H1 (cell line): ENCODE measurements at regions of chr18 and their contacts with region 1.

Region 1: DNA sequence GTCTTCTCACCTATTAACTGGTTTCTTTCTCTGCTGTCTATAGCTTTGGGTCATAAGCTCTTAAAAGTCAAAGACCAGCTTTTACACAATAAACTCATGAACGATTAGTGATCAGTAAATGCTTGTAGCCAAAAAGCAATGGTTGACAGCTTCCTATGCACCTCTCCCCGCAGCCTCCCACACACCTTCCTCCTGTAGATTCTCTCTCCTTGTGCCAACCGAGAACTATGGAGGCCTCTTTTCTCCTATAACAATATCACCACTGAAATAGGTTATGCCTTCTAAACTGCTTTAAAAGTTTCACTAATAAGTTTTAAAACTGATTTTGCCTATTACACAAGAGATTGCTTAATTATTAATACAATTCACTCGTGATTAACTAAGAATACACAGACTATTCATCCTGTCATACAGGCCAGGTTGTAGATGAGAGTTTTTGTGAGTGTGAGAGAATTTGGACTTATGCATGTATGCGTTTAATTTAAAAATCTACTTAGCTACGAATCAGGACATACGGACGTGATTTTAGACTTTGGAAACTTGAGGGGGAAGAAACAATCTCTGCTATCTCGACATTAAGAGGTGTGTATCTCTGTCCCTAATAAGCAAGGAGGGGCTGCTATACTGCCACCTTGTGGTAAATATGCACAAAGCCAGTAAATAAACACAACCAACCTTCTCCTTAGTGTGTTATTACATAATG is 229.1 kb upstream of the RBBP8 start:
- DNase-seq: no peak
- H3K4me3 ChIP-seq: no peak overlapping the region
- H3K27ac ChIP-seq: no peak overlapping the region
- H3K4me1 ChIP-seq: no peaks in the 10 kb centered on the region
- H3K27me3 ChIP-seq: no peaks in the 10 kb centered on the region
- CTCF ChIP-seq: peak in 2 of 3 experiments; percentile 55 to 69; a peak in 3 of 4 replicates
- EP300 ChIP-seq: no peak
- POLR2A ChIP-seq: no peak
- RAD21 ChIP-seq: peak; percentile 67 to 76

Region 2: DNA sequence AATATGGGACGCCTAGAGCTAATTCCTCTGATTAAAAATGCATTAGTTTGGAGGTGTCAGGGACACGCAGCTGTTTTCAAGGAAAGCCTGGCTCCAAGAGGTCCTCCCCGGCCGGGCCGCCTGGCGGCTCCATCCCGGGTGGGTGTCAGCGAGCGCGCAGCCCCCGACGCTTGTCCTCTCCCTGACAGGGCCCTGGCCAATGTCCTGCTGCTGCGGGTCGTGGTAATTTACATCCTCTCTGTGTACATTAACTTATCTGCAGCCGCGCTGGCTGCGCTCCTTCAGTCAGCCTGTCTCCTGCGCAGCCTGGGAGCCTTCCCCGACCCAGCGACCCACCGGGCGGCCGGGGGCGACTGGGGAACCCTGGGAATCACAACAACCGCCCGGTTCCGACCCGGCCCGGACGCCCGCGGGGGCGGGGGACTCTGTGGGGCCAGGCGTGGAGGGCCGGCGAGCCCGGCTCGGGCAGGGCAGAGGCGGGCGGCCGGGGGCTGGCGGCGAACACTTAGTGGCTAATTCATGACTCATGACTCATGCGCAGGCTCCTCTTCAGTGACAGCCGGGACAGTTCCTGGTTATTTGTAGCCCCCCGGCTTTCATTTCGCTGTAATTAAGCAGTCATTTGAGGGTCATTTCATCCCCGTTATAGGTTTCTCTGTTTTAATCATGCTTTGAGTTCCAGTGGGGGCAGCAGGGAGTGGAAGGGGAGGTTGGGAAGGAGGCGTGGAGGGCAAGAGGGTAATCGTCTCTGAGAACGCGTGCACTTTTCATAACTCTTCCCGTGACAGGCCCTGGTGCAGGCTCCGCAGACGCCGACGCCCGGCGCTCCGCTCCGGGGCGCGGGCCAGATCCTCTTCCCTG is 144.4 kb before region 1 on chr18:
- CTCF ChIA-PET with region 1: no interaction called
- POLR2A ChIA-PET with region 1: no interaction called
- DNase-seq: peak in 1 of 2 experiments; percentile 61
- H3K4me3 ChIP-seq: peak overlapping the region; percentile 27 to 68 (median 46)
- H3K27ac ChIP-seq: no peak overlapping the region
- H3K4me1 ChIP-seq: peaks cover 0 to 3% (median 2%) of the 10 kb centered on the region in 4 experiments; a peak in 4 of 7 replicates
- H3K27me3 ChIP-seq: peaks cover 7 to 31% (median 29%) of the 10 kb centered on the region in 4 experiments
- CTCF ChIP-seq: no peak
- EP300 ChIP-seq: no peak
- POLR2A ChIP-seq: no peak
- RAD21 ChIP-seq: no peak

Region 3: GRCh38 chr18:22663378-22663777 is 40.7 kb before region 1 on chr18:
- CTCF ChIA-PET with region 1: no interaction called
- POLR2A ChIA-PET with region 1: no interaction called
- DNase-seq: no peak
- H3K4me3 ChIP-seq: no peak overlapping the region
- H3K27ac ChIP-seq: no peak overlapping the region
- H3K4me1 ChIP-seq: no peaks in the 10 kb centered on the region
- H3K27me3 ChIP-seq: no peaks in the 10 kb centered on the region
- CTCF ChIP-seq: no peak
- EP300 ChIP-seq: no peak
- POLR2A ChIP-seq: no peak
- RAD21 ChIP-seq: no peak

Region 4: GRCh38 chr18:22691946-22692710 is 11.9 kb before region 1 on chr18:
- CTCF ChIA-PET with region 1: interaction called, 13 read pairs
- POLR2A ChIA-PET with region 1: no interaction called
- DNase-seq: no peak
- H3K4me3 ChIP-seq: no peak overlapping the region
- H3K27ac ChIP-seq: no peak overlapping the region
- H3K4me1 ChIP-seq: peaks cover 0 to 4% (median 1%) of the 10 kb centered on the region in 4 experiments; a peak in 2 of 7 replicates
- H3K27me3 ChIP-seq: peaks cover 0 to 1% (median 0%) of the 10 kb centered on the region in 4 experiments; a peak in 1 of 7 replicates
- CTCF ChIP-seq: no peak
- EP300 ChIP-seq: no peak
- POLR2A ChIP-seq: no peak
- RAD21 ChIP-seq: no peak

Region 5: GRCh38 chr18:22872900-22873551 is 169.0 kb after region 1 on chr18:
- CTCF ChIA-PET with region 1: no interaction called
- POLR2A ChIA-PET with region 1: no interaction called
- DNase-seq: no peak
- H3K4me3 ChIP-seq: no peak overlapping the region
- H3K27ac ChIP-seq: no peak overlapping the region
- H3K4me1 ChIP-seq: no peaks in the 10 kb centered on the region
- H3K27me3 ChIP-seq: no peaks in the 10 kb centered on the region
- CTCF ChIP-seq: no peak
- EP300 ChIP-seq: no peak
- POLR2A ChIP-seq: no peak
- RAD21 ChIP-seq: no peak